Psoas muscle (tissue), 8 donors: ENCODE measurements at regions of chr2 and their contacts with region 1.

Region 1: DNA sequence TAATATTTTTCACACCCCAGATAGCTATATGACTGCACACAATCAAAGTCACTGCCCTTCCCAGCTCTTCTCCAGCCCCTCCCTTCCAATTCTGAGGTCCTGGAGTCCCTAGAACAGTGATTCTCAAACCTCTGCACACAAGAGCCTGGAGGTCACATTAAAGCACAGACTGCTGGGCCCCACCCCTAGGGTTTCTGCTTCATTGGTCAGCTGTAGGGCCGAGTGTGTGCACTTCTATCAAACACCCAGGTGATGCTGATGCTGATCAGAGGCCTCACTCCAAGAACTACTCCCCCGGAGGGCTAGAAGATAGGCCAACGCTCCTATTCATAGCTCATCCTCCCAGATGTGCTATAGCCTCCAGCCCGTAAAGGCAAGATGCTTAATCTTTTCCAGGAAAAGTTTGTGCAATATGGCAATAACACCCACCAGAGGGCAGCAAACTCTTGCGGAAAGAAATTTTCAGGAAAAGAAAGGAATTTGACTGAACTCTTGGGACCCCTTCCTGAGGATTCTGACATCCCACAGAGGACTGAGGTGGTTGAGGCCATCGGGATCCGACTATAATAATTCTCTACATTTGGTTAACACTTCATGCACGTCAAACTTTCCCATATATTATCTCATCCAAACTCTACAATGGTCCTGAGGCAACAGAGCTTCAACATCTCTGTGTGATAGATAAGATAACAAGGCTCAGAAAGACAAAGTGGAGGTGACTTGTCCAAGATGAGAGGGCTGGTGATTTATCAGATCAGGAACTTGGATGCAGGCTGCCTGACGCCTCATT is 194.2 kb upstream of the PKDCC start:
- DNase-seq: no peak
- ATAC-seq: peak in 2 of 4 donors; percentile 54 to 61
- H3K4me3 ChIP-seq: no peak overlapping the region
- H3K27ac ChIP-seq: no peak overlapping the region
- H3K4me1 ChIP-seq: peaks cover 13% of the 10 kb centered on the region
- H3K27me3 ChIP-seq: no peaks in the 10 kb centered on the region
- CTCF ChIP-seq: peak; percentile 66

Region 2: GRCh38 chr2:42086500-42086953 is 232.9 kb after region 1 on chr2:
- intact Hi-C with region 1: loop called in 1 of 2 experiments (anchors 5 kb)
- DNase-seq: no peak
- ATAC-seq: peak; percentile 73 to 87 (median 79)
- H3K4me3 ChIP-seq: no peak overlapping the region
- H3K27ac ChIP-seq: no peak overlapping the region
- H3K4me1 ChIP-seq: no peaks in the 10 kb centered on the region
- H3K27me3 ChIP-seq: no peaks in the 10 kb centered on the region
- CTCF ChIP-seq: peak; percentile 76

Region 3: GRCh38 chr2:42342061-42342794 is 488.6 kb after region 1 on chr2:
- intact Hi-C with region 1: loop called in 1 of 2 experiments (anchors 5 kb)
- DNase-seq: peak; percentile 61 to 76
- ATAC-seq: peak; percentile 95 to 98 (median 98)
- H3K4me3 ChIP-seq: peak overlapping the region; percentile 2
- H3K27ac ChIP-seq: peak overlapping the region; percentile 73
- H3K4me1 ChIP-seq: peaks cover 14% of the 10 kb centered on the region
- H3K27me3 ChIP-seq: no peaks in the 10 kb centered on the region
- CTCF ChIP-seq: no peak